ENCODE measurements at regions of chr7 and their contacts with region 1.

Region 1: DNA sequence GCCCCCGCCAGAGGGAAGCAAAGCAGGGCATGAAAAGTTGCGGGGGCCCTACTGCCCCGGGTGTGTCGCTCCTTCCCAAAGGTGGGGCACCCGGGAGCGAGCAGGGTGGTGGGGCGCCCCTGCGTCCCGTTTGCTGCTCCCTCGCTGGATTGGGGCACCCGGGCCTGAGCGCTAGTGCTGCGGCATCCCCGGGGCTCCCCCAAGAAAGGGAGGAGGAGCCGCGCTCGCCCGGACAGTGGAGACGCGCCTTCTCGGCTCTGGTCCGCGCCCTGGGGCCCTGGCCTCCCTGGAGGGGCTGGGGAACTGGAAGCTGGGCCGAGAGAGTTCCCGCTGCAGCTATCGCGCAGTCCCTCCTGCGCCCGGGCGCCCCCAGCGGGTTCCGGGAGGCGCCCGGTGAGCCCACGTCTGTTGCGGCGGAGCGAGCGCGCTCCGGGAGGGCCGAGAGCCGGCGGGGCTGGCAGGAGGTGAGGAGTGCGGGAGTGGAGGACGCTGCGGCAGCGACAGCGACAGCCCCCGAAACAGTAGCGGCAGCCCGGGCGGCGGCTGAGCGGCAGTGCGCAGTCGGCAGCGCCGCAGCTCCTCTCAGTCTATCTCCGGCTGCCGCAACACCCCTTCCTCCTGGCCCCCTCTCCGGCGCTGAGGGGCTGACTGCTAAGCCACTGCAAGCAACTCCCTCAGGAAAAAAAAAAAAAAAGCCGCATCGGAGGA is 504 bp upstream of the BMPER start:
- DNase-seq: peak in 1 of 2 donors; percentile 45
- ATAC-seq: peak; percentile 74 to 87 (median 76)
- H3K4me3 ChIP-seq: peak overlapping the region; percentile 47 to 74 (median 64)
- H3K27ac ChIP-seq: peak overlapping the region in 8 of 10 donors; percentile 5 to 73 (median 46)
- H3K4me1 ChIP-seq: peaks cover 0 to 20% (median 8%) of the 10 kb centered on the region in 9 donors
- H3K27me3 ChIP-seq: peaks cover 4 to 89% (median 55%) of the 10 kb centered on the region in 7 donors
- CTCF ChIP-seq: peak in 3 of 9 donors; percentile 17 to 29 (median 19)

Region 2: GRCh38 chr7:33716581-33717477 is 188.0 kb before region 1 on chr7:
- intact Hi-C with region 1: loop called in 1 of 10 experiments (anchors 5 kb)
- DNase-seq: no peak
- ATAC-seq: no peak
- H3K4me3 ChIP-seq: no peak overlapping the region
- H3K27ac ChIP-seq: no peak overlapping the region
- H3K4me1 ChIP-seq: peaks cover 0 to 16% (median 10%) of the 10 kb centered on the region in 9 donors
- H3K27me3 ChIP-seq: peaks cover 0 to 3% (median 0%) of the 10 kb centered on the region in 7 donors
- CTCF ChIP-seq: peak; percentile 45 to 78 (median 66)

Region 3: DNA sequence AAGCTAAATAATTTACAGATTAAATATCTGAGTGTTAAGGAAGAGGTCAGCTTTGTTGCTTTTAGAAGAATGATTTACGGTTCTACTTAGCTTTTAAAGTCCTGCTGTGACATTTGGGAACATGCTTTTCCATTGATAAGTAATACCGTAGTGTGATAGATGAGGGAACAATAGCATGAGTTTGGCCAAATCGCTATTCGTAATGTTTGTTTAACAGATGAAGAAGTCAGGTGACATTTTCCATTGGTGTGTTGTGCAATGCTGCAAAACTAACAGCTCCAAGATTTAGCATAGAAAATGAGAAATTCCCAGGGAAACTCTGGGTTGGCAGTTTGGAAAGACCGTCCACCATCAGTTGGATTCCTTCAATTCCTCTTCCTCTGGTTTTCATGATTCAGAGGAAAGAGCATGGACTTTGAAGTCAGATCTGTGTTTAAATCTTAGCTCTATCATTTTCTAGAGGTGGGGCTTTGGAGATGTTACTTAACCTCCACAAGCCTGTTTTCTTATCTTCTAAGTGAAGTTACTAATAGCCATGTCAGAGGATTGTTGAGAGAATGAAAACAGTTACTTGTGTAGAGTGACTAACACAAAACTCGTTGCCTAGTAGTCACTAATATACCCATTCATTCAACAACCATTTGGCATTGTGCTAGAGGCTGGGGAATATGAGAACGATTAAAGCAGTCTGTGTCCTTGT is 139.9 kb before region 1 on chr7:
- intact Hi-C with region 1: loop called in 1 of 10 experiments (anchors 5 kb)
- DNase-seq: no peak
- ATAC-seq: peak in 4 of 8 donors; percentile 46 to 53 (median 47)
- H3K4me3 ChIP-seq: no peak overlapping the region
- H3K27ac ChIP-seq: no peak overlapping the region
- H3K4me1 ChIP-seq: peaks cover 0 to 4% (median 0%) of the 10 kb centered on the region in 9 donors
- H3K27me3 ChIP-seq: no peaks in the 10 kb centered on the region
- CTCF ChIP-seq: no peak

Region 4: GRCh38 chr7:35454575-35455385 is 1549.9 kb after region 1 on chr7:
- intact Hi-C with region 1: no loop called
- DNase-seq: no peak
- ATAC-seq: peak in 1 of 8 donors; percentile 59
- H3K4me3 ChIP-seq: peak overlapping the region in 7 of 10 donors; percentile 2 to 33 (median 12)
- H3K27ac ChIP-seq: no peak overlapping the region
- H3K4me1 ChIP-seq: peaks cover 0 to 5% (median 0%) of the 10 kb centered on the region in 9 donors
- H3K27me3 ChIP-seq: peaks cover 0 to 31% (median 11%) of the 10 kb centered on the region in 7 donors
- CTCF ChIP-seq: no peak

Measured in heart right ventricle (tissue), 16 donors.